ENCODE measurements at regions of chr14 and their contacts with region 1.

Region 1: GRCh38 chr14:105700622-105701288 is 174.4 kb downstream of the TMEM121 start:
- DNase-seq: no peak
- ATAC-seq: no peak
- H3K4me3 ChIP-seq: no peak overlapping the region
- H3K27ac ChIP-seq: no peak overlapping the region
- H3K4me1 ChIP-seq: no peaks in the 10 kb centered on the region
- H3K27me3 ChIP-seq: no peaks in the 10 kb centered on the region
- CTCF ChIP-seq: no peak

Region 2: DNA sequence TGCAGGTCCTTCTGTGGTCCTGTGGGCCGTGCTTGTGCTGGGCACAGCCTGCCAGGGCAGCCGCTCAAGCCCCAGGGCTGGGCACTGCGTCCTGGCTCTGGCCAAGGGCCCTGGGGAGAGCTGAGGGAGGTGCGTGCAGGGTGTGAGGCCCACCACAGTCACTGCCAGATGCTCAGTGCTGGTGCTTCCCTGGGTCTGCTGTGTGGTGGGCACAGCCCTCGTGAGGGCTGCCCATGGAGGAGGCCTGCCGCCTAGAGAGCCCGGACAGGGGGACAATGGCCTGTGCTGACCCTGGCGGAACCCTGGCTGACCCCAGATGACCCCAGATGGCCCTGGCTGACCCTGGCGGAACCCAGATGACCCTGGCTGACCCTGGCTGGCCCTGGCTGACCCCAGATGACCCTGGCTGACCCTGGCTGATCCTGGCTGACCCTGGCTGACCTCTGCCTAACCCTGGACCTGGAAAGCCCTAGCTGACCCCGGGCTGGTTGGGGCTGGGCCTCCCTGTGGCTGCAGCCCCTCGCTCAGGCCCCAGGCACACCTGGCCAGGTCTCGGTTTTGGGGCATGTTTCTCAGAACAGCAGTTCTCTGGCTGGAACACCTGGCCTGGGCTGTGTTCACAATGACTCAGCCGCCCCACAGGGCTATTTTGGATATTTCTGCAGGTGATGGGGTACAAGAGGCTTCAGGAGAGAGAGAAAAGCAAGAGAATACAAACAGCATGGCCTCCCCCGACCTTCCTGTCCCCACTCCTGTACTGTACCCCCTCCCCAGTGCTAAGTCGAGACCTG is 119.0 kb before region 1 on chr14:
- CTCF ChIA-PET with region 1: no interaction called
- POLR2A ChIA-PET with region 1: no interaction called
- in situ Hi-C with region 1: no loop called
- intact Hi-C with region 1: loop called (anchors 5 kb)
- DNase-seq: no peak
- ATAC-seq: no peak; the same call in 1 of the 2 replicates
- H3K4me3 ChIP-seq: no peak overlapping the region
- H3K27ac ChIP-seq: no peak overlapping the region
- H3K4me1 ChIP-seq: no peaks in the 10 kb centered on the region
- H3K27me3 ChIP-seq: no peaks in the 10 kb centered on the region
- CTCF ChIP-seq: no peak

Measured in Panc1 (cell line).